ENCODE measurements at regions of chr2 and their contacts with region 1.

Region 1: DNA sequence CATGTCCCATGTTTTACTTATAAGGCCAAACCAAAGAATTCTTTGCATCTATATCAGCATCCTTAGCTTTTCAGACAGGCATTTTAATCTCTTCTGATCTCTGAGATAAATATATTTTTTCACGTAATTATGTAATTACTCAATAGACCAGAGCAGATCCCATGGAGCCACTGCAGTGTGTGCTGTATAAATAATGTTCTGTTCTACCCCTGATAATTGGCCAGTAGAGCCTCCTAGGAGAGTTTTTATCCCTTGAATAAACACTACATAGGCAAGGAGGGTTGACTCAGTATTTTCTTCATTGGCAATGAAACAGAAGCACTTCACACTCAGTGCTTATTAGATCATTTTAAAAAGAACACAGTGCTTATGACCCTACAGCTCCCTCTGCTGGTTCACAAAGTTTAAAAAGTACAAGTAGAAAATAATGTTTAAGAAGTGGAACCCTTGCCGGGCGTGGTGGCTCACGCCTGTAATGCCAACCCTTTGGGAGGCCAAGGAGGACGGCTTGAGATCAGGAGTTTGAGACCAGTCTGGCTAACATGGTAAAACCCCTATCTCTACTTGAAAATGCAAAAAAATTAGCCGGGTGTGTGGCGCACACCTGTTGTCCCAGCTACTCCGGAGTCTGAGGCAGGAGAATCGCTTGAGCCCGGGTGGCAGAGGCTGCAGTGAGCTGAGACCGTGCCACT is 91.9 kb downstream of the PPP1R1C start:
- DNase-seq: no peak
- ATAC-seq: peak; percentile 91 to 98

Region 2: GRCh38 chr2:181742922-181743722 is 334.5 kb before region 1 on chr2:
- intact Hi-C with region 1: loop called (anchors 2 to 10 kb)
- DNase-seq: peak; percentile 36
- ATAC-seq: peak; percentile 33 to 50

Region 3: DNA sequence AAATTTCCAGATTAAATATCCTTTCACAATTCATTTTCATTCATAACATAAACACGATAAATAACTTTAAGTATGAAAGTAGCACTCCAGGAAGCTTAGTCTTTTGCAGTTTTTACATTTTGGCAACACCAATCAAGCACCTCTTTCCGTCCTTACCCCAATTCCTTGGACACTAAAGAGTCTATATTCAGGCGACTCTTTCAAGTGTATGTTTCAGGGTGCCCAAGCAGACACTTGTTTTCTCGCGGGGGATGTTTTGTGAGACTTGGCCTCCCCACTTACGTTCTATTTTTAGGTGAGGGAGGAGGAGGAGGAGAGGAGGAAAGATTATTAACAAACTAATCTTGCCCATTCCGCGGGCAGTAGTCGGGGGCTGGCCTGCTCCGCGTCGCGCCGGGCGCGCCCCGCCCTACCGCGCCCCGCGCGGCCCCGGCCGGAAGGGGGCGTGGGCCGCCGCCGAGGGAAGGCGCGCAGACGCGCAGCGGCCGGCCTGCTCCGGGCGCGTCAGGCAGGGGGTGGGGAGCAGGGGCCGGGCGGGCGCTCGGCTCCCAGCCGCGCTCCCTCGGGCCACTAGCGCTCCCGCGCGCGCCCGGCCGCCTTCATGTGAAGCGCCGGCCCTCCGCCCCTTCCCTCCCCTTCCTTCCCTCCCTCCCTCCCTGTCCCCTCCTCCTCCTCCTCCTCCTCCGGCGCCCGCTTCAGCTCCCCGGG is 186.2 kb before region 1 on chr2 and contains the start of gene ITPRID2:
- intact Hi-C with region 1: loop called in 1 of 2 experiments (anchors 10 kb)
- DNase-seq: peak; percentile 91
- ATAC-seq: peak; percentile 98
- total RNA-seq, gene ITPRID2: 61.5 to 88.7 TPM

Region 4: DNA sequence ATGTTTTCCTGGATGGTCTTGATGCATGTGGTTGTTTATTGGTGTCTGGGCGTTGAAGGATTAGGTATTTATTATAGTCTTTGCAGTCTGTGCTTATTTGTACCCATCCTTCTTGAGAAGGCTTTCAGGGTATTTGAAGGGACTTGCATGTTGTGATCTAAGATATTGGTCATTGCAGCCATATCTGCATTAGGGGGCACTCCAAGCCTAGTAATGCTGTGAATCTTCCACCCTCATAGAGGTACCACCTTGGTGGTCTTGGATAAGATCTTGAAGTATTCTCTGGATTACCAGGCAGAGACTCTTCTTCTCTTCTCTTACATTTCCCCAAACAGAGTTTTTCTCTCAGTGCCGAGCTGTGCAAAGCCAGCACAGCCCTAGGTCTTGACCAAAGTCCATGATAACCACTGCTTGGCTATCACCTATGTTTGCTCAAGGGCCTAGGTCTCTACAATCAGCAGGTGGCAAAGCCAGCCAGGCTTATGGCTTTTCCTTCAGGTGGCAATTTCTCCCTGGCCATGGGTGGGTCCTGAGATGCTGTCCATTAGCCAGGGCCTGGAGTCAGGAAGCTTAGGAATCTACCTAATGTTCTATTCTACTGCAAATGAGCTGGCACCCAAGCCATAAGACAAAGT is 107.3 kb before region 1 on chr2:
- intact Hi-C with region 1: loop called in 1 of 2 experiments (anchors 5 kb)
- DNase-seq: no peak
- ATAC-seq: no peak